ENCODE measurements at regions of chrX and their contacts with region 1.

Region 1: DNA sequence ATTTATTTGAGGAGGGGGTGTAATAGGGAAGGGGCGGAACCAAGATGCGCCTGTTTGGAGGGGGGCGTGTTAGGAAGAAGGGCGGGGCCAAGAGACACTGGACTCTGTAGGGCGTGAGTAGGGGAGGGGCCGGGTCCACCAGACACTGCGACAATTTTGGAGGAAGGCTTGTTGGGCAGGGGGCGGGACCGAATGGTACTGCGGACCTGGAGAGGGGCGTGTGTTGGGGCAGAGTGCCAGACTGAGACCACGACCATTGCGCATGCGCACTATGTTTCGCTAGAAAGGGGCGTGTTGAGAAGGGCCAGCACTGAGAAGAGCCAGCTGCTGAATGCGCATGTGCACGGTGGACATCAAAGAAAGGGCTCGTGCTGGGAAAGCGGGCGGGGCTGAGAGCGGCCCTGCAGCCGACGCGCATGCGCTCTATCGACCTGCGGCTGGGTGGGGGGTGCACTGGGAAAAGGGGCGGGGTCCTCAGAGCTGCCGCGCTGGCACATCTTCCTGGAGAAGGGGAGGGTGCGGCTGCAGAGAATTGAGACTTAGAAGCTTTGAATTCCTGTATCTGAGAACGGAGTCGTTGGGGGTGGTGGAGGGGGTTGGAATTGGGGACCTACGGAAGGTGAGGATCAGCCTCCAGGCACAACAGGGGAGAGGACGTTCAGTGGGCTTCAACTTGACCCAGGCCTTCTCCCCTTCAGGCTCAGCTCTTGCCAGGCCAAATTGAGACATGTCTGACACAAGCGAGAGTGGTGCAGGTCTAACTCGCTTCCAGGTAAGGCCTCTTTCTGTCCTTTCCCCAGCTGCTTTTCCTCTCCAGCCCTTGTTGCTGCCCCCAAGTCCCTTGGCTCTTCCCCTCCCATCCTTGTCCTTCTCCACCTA is 1.3 kb downstream of the MAGED2 start:
- DNase-seq: peak; percentile 93
- ATAC-seq: peak; percentile 92
- H3K4me3 Mint-ChIP-seq: peak overlapping the region; percentile 87
- H3K27ac Mint-ChIP-seq: peak overlapping the region; percentile 89
- H3K4me1 Mint-ChIP-seq: peaks cover 16% of the 10 kb centered on the region
- H3K27me3 Mint-ChIP-seq: no peaks in the 10 kb centered on the region

Region 2: DNA sequence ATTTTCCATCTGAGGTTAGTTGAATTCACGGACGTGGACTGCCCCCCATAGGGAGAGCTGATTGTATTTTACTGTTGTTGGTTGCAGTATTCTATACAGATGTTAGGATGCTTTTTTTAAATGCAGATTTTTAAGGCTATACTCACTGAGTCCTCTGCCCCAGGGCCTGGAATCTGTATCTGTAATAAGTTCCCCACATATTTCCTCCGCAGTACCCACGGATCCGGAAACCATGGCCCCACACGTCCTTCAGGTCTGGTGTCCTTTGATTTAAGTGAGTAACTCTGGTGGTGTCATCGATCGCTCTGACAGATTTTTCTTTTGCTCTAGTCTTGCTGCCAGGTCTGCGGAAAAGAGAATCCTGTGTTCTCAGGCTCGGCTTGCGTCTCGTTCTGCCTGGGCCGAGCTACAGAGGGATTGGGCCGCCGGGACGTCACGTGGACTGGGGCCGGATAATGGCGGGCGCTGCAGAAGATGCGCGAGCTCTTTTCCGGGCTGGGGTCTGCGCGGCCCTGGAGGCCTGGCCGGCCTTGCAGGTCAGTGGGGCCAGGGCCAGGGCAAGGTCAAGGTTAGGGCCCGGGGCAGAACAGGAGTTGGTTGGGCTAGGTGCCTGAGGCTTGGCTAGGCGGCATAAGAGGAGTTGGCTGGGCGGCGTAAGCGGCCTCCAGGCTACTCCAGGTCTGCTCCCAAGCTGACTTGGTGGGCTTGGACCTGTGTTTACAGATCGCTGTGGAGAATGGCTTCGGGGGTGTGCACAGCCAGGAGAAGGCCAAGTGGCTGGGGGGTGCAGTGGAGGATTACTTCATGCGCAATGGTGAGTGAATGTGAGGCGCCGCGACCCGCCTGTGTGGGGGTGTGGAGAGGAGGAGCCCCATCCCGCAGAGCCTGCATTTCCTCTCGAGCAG is 368.6 kb before region 1 on chrX and contains the start of gene TSR2:
- CTCF ChIA-PET with region 1: no interaction called
- POLR2A ChIA-PET with region 1: no interaction called
- intact Hi-C with region 1: loop called in 1 of 2 experiments (anchors 1 kb)
- DNase-seq: peak; percentile 88
- ATAC-seq: peak; percentile 96
- H3K4me3 Mint-ChIP-seq: peak within 1 kb of the TSS; percentile 88
- H3K27ac Mint-ChIP-seq: peak within 1 kb of the TSS; percentile 83
- H3K4me1 Mint-ChIP-seq: peaks cover 18% of the 10 kb centered on the region
- H3K27me3 Mint-ChIP-seq: no peaks in the 10 kb centered on the region
- total RNA-seq, gene TSR2: 31.0 to 34.1 TPM

Region 3: GRCh38 chrX:54529552-54530357 is 279.1 kb before region 1 on chrX and contains the start of gene GNL3L:
- CTCF ChIA-PET with region 1: interaction called, 3 read pairs
- POLR2A ChIA-PET with region 1: interaction called, 4 read pairs
- intact Hi-C with region 1: loop called in 1 of 2 experiments (anchors 1 kb)
- DNase-seq: peak; percentile 89
- ATAC-seq: peak; percentile 88
- H3K4me3 Mint-ChIP-seq: peak within 1 kb of the TSS; percentile 90
- H3K27ac Mint-ChIP-seq: peak within 1 kb of the TSS; percentile 90
- H3K4me1 Mint-ChIP-seq: peaks cover 26% of the 10 kb centered on the region
- H3K27me3 Mint-ChIP-seq: no peaks in the 10 kb centered on the region
- total RNA-seq, gene GNL3L: 62.5 to 62.8 TPM

Region 4: GRCh38 chrX:54921427-54922021 is 112.7 kb after region 1 on chrX:
- CTCF ChIA-PET with region 1: no interaction called
- POLR2A ChIA-PET with region 1: no interaction called
- intact Hi-C with region 1: loop called in 1 of 2 experiments (anchors 1 kb)
- DNase-seq: peak; percentile 77
- ATAC-seq: peak; percentile 88
- H3K4me3 Mint-ChIP-seq: peak overlapping the region; percentile 79
- H3K27ac Mint-ChIP-seq: peak overlapping the region; percentile 73
- H3K4me1 Mint-ChIP-seq: peaks cover 11% of the 10 kb centered on the region
- H3K27me3 Mint-ChIP-seq: no peaks in the 10 kb centered on the region

Region 5: GRCh38 chrX:54999717-55000598 is 191.1 kb after region 1 on chrX and contains the start of gene APEX2:
- CTCF ChIA-PET with region 1: no interaction called
- POLR2A ChIA-PET with region 1: no interaction called
- intact Hi-C with region 1: loop called (anchors 1 kb)
- DNase-seq: peak; percentile 92
- ATAC-seq: peak; percentile 96
- H3K4me3 Mint-ChIP-seq: peak within 1 kb of the TSS; percentile 94
- H3K27ac Mint-ChIP-seq: peak within 1 kb of the TSS; percentile 94
- H3K4me1 Mint-ChIP-seq: peaks cover 21% of the 10 kb centered on the region
- H3K27me3 Mint-ChIP-seq: no peaks in the 10 kb centered on the region
- total RNA-seq, gene APEX2: 37.7 to 41.4 TPM

Region 6: GRCh38 chrX:55057675-55058249 is 248.9 kb after region 1 on chrX:
- CTCF ChIA-PET with region 1: no interaction called
- POLR2A ChIA-PET with region 1: no interaction called
- intact Hi-C with region 1: loop called in 1 of 2 experiments (anchors 5 kb)
- DNase-seq: peak; percentile 31
- ATAC-seq: peak; percentile 73
- H3K4me3 Mint-ChIP-seq: peak overlapping the region; percentile 46
- H3K27ac Mint-ChIP-seq: no peak overlapping the region
- H3K4me1 Mint-ChIP-seq: peaks cover 18% of the 10 kb centered on the region
- H3K27me3 Mint-ChIP-seq: no peaks in the 10 kb centered on the region

Region 7: GRCh38 chrX:55717521-55718497 is 909.0 kb after region 1 on chrX and contains the start of gene RRAGB:
- CTCF ChIA-PET with region 1: no interaction called
- POLR2A ChIA-PET with region 1: no interaction called
- intact Hi-C with region 1: loop called in 1 of 2 experiments (anchors 2 kb)
- DNase-seq: peak; percentile 93
- ATAC-seq: peak; percentile 99
- H3K4me3 Mint-ChIP-seq: peak within 1 kb of the TSS; percentile 87
- H3K27ac Mint-ChIP-seq: peak within 1 kb of the TSS; percentile 87
- H3K4me1 Mint-ChIP-seq: peaks cover 33% of the 10 kb centered on the region
- H3K27me3 Mint-ChIP-seq: no peaks in the 10 kb centered on the region
- total RNA-seq, gene RRAGB: 4.3 to 5.0 TPM

Measured in activated CD4-positive, alpha-beta T cell treated with anti-CD3 and anti-CD28 coated beads for 36 hours (primary cell).